Activated B cell treated with CpG ODN at 0.5 μM for 24 hours (primary cell): ENCODE measurements at regions of chr3 and their contacts with region 1.

Region 1: GRCh38 chr3:171049861-171050444 is 23.4 kb upstream of the SLC2A2 start:
- DNase-seq: no peak
- ATAC-seq: peak; percentile 42
- H3K4me3 Mint-ChIP-seq: no peak overlapping the region
- H3K27ac Mint-ChIP-seq: no peak overlapping the region
- H3K4me1 Mint-ChIP-seq: no peaks in the 10 kb centered on the region
- H3K27me3 Mint-ChIP-seq: no peaks in the 10 kb centered on the region
- CTCF ChIP-seq: no peak

Region 2: GRCh38 chr3:171772427-171773056 is 722.6 kb after region 1 on chr3:
- CTCF ChIA-PET with region 1: interaction called, 7 read pairs
- POLR2A ChIA-PET with region 1: no interaction called
- intact Hi-C with region 1: loop called (anchors 1 kb)
- DNase-seq: no peak
- ATAC-seq: no peak
- H3K4me3 Mint-ChIP-seq: no peak overlapping the region
- H3K27ac Mint-ChIP-seq: no peak overlapping the region
- H3K4me1 Mint-ChIP-seq: peaks cover 3% of the 10 kb centered on the region
- H3K27me3 Mint-ChIP-seq: peaks cover 3% of the 10 kb centered on the region
- CTCF ChIP-seq: no peak